SK-N-SH (cell line): ENCODE measurements at regions of chr19 and their contacts with region 1.

Region 1: GRCh38 chr19:45016388-45017319 is 15.4 kb downstream of the RELB start:
- DNase-seq: peak; percentile 88
- H3K4me3 ChIP-seq: no peak overlapping the region; a peak in 1 of 4 replicates
- H3K27ac ChIP-seq: no peak overlapping the region
- H3K4me1 ChIP-seq: no peaks in the 10 kb centered on the region
- H3K27me3 ChIP-seq: no peaks in the 10 kb centered on the region
- CTCF ChIP-seq: peak; percentile 81
- EP300 ChIP-seq: no peak
- RAD21 ChIP-seq: peak; percentile 83

Region 2: DNA sequence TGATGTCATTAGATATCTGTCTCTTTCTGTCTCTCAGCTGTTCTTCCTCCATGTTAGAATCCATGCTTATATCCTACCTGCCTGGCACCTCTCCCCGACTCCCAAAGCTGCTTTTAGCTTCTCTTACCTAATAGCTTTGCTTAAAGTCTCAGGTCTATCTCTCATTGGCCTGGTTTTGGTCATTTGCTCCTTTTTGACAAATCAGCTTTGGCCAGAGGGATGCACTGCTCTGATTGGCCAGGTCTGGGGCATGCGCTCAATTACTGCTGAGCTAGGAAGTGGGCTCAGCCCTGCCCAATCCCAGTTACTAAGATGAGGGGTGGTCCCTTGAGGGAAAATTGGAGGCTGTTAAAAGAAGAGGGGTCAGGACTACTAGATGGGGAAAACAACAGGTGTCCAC is 10.7 kb after region 1 on chr19:
- CTCF ChIA-PET with region 1: interaction called, 13 read pairs
- POLR2A ChIA-PET with region 1: no interaction called
- DNase-seq: no peak
- H3K4me3 ChIP-seq: no peak overlapping the region
- H3K27ac ChIP-seq: no peak overlapping the region
- H3K4me1 ChIP-seq: no peaks in the 10 kb centered on the region
- H3K27me3 ChIP-seq: no peaks in the 10 kb centered on the region
- CTCF ChIP-seq: no peak
- EP300 ChIP-seq: no peak
- RAD21 ChIP-seq: no peak